Naive thymus-derived CD4-positive, alpha-beta T cell (primary cell): ENCODE measurements at regions of chr11 and their contacts with region 1.

Region 1: DNA sequence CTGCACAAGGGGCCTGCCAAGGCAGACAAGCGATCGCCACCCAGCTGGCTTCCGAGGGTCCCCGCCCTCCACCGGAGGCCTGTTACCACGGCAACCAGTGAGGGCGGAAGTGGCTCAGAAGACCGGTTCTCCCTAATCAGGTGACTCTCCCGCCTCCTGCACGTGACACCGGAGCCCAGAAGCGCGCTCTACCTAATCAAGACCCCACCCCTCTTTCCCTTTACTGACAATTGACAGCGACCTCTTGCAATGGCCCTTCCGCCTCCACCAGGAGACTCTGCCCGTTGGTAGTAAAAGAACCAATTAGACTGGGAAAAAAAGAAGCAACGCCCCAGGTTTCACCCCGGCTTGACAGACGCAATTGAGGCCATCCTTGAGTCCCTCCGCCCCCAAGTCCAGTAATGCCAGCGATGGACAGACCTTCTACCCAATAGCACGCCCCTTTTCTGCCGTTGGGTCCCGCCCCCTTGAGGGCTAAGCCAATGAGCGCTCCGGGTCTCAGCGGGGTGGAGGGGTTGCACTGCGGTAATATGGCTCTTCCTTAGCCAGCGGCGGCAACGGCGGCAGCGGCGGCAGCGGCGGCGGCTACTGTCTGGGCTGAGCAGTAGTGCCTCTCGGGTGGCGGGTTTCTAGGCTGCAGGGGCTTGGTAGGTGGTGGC is at the start of gene UVRAG:
- DNase-seq: peak; percentile 96 to 99 (median 98)
- ATAC-seq: peak; percentile 94
- H3K4me3 ChIP-seq: peak within 1 kb of the TSS; percentile 96
- H3K4me3 Mint-ChIP-seq: peak within 1 kb of the TSS in 3 of 10 donors; percentile 93 to 99 (median 98)
- H3K27ac ChIP-seq: peak within 1 kb of the TSS; percentile 83
- H3K27ac Mint-ChIP-seq: peak within 1 kb of the TSS in 7 of 9 donors; percentile 88 to 100 (median 96)
- H3K4me1 ChIP-seq: peaks cover 14 to 26% of the 10 kb centered on the region in 2 donors
- H3K4me1 Mint-ChIP-seq: peaks cover 5 to 21% (median 20%) of the 10 kb centered on the region in 7 donors
- H3K27me3 ChIP-seq: no peaks in the 10 kb centered on the region
- H3K27me3 Mint-ChIP-seq: peaks cover 0 to 4% (median 0%) of the 10 kb centered on the region in 5 donors
- total RNA-seq, gene UVRAG: 24.0 to 46.1 (median 25.4) TPM

Region 2: GRCh38 chr11:74988541-74989260 is 826.1 kb before region 1 on chr11 and contains the start of gene NEU3:
- CTCF ChIA-PET with region 1: no interaction called
- POLR2A ChIA-PET with region 1: no interaction called
- intact Hi-C with region 1: loop called in 1 of 2 experiments (anchors 2 kb)
- DNase-seq: peak; percentile 64 to 82 (median 78)
- ATAC-seq: peak; percentile 97
- H3K4me3 ChIP-seq: peak within 1 kb of the TSS; percentile 96
- H3K4me3 Mint-ChIP-seq: peak within 1 kb of the TSS; percentile 88 to 97 (median 93)
- H3K27ac ChIP-seq: peak within 1 kb of the TSS; percentile 81
- H3K27ac Mint-ChIP-seq: peak within 1 kb of the TSS; percentile 75 to 94 (median 89)
- H3K4me1 ChIP-seq: peaks cover 8 to 16% of the 10 kb centered on the region in 2 donors
- H3K4me1 Mint-ChIP-seq: peaks cover 16 to 37% (median 31%) of the 10 kb centered on the region in 7 donors
- H3K27me3 ChIP-seq: no peaks in the 10 kb centered on the region
- H3K27me3 Mint-ChIP-seq: no peaks in the 10 kb centered on the region
- total RNA-seq, gene NEU3: 12.6 to 18.9 (median 16.1) TPM

Region 3: GRCh38 chr11:75562048-75562835 is 252.6 kb before region 1 on chr11 and contains the start of gene SERPINH1:
- CTCF ChIA-PET with region 1: no interaction called
- POLR2A ChIA-PET with region 1: no interaction called
- intact Hi-C with region 1: loop called in 1 of 2 experiments (anchors 10 kb)
- DNase-seq: peak; percentile 29 to 73 (median 45)
- ATAC-seq: peak; percentile 80
- H3K4me3 ChIP-seq: peak within 1 kb of the TSS; percentile 91
- H3K4me3 Mint-ChIP-seq: peak within 1 kb of the TSS; percentile 94 to 99 (median 99)
- H3K27ac ChIP-seq: peak within 1 kb of the TSS; percentile 86
- H3K27ac Mint-ChIP-seq: peak within 1 kb of the TSS; percentile 87 to 97 (median 95)
- H3K4me1 ChIP-seq: peaks cover 15 to 22% of the 10 kb centered on the region in 2 donors
- H3K4me1 Mint-ChIP-seq: peaks cover 18 to 46% (median 32%) of the 10 kb centered on the region in 7 donors
- H3K27me3 ChIP-seq: no peaks in the 10 kb centered on the region
- H3K27me3 Mint-ChIP-seq: peaks cover 0 to under 1% (median 0%) of the 10 kb centered on the region in 5 donors
- total RNA-seq, gene SERPINH1: 5.1 to 19.9 (median 13.2) TPM

Region 4: DNA sequence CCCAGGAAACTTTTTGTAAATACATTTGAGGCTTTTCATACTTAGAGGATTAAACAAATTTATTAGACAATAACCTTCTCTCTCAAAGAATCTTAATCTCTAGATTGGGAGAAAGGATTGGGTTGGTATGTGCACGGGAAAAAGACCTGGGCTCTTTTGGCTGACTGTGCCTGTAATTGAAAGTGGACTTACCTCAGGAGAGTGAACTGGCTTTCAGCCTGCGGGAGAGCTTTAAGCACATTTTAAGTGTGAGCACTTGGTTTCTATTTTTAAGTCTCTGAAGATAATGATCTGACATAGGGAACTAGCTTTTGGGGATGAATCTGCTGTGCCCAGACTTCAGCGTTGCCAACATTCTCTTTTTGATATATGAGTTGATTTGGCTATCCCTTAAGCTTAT is 36.0 kb after region 1 on chr11:
- CTCF ChIA-PET with region 1: no interaction called
- POLR2A ChIA-PET with region 1: interaction called, 3 read pairs
- intact Hi-C with region 1: loop called in 1 of 2 experiments (anchors 5 kb)
- DNase-seq: no peak
- ATAC-seq: no peak
- H3K4me3 ChIP-seq: no peak overlapping the region
- H3K4me3 Mint-ChIP-seq: no peak overlapping the region
- H3K27ac ChIP-seq: no peak overlapping the region
- H3K27ac Mint-ChIP-seq: peak overlapping the region in 4 of 9 donors; percentile 7 to 74 (median 10)
- H3K4me1 ChIP-seq: peaks cover 0 to 4% of the 10 kb centered on the region in 2 donors
- H3K4me1 Mint-ChIP-seq: peaks cover 16 to 48% (median 30%) of the 10 kb centered on the region in 7 donors
- H3K27me3 ChIP-seq: no peaks in the 10 kb centered on the region
- H3K27me3 Mint-ChIP-seq: no peaks in the 10 kb centered on the region

Region 5: DNA sequence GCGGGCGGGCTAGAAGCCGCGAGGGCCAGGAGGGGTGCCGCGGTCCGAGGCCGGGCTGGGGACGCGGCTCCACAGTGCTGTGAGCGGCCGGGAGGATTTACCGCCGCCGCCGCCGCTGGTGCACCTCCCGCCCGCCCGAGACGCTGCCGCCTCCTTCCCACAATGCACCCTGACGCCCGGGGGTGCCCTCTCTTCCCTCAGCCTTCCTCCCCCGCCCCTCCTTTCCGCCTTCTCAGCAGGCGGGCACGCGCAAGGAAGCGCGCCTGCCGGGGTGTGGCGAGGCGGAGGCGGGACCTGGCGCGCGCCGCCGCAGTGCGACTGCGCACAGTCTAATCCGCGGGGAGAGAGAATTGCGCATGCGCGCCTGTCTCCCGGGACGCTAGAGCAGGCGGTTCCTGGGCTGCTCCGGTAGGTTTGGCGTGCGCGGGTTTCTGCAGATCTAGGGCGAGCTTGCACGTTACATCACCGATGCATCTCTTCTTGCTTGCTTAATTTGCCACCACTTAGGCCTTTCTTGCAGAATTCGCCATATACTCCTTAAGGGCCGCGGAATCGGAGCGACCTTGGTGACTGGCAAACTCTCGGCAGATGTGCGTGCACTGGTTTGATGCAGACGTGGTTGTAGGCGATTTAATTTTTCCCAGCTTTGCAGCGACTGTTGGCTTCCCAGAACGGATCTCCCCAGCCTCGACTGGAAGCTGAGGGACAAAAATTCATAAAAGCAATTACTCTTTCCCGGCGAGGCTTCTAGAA is 566.3 kb after region 1 on chr11 and contains the starts of genes GVQW3 and THAP12:
- CTCF ChIA-PET with region 1: no interaction called
- POLR2A ChIA-PET with region 1: no interaction called
- intact Hi-C with region 1: loop called (anchors 1 kb)
- DNase-seq: peak; percentile 96 to 99 (median 98)
- ATAC-seq: peak; percentile 96
- H3K4me3 ChIP-seq: peak within 1 kb of the TSS; percentile 86
- H3K4me3 Mint-ChIP-seq: peak within 1 kb of the TSS; percentile 92 to 98 (median 97)
- H3K27ac ChIP-seq: peak within 1 kb of the TSS; percentile 72
- H3K27ac Mint-ChIP-seq: peak within 1 kb of the TSS; percentile 75 to 98 (median 92)
- H3K4me1 ChIP-seq: peaks cover 22 to 43% of the 10 kb centered on the region in 2 donors
- H3K4me1 Mint-ChIP-seq: peaks cover 51 to 76% (median 69%) of the 10 kb centered on the region in 7 donors
- H3K27me3 ChIP-seq: no peaks in the 10 kb centered on the region
- H3K27me3 Mint-ChIP-seq: no peaks in the 10 kb centered on the region
- total RNA-seq, gene GVQW3: 3.6 to 9.1 (median 6.7) TPM
- total RNA-seq, gene THAP12: 40.3 to 57.9 (median 51.1) TPM

Region 6: GRCh38 chr11:77637345-77638165 is 1822.7 kb after region 1 on chr11 and contains the start of gene CLNS1A:
- CTCF ChIA-PET with region 1: no interaction called
- POLR2A ChIA-PET with region 1: no interaction called
- intact Hi-C with region 1: loop called in 1 of 2 experiments (anchors 5 kb)
- DNase-seq: peak; percentile 53 to 79 (median 75)
- ATAC-seq: peak; percentile 99
- H3K4me3 ChIP-seq: peak within 1 kb of the TSS; percentile 77
- H3K4me3 Mint-ChIP-seq: peak within 1 kb of the TSS; percentile 91 to 97 (median 96)
- H3K27ac ChIP-seq: peak within 1 kb of the TSS; percentile 87
- H3K27ac Mint-ChIP-seq: peak within 1 kb of the TSS; percentile 86 to 98 (median 95)
- H3K4me1 ChIP-seq: peaks cover 7 to 19% of the 10 kb centered on the region in 2 donors
- H3K4me1 Mint-ChIP-seq: peaks cover 34 to 49% (median 44%) of the 10 kb centered on the region in 7 donors
- H3K27me3 ChIP-seq: no peaks in the 10 kb centered on the region
- H3K27me3 Mint-ChIP-seq: no peaks in the 10 kb centered on the region
- total RNA-seq, gene CLNS1A: 82.2 to 149 (median 113) TPM